CD8-positive, alpha-beta memory T cell (primary cell): ENCODE measurements at regions of chr2 and their contacts with region 1.

Region 1: DNA sequence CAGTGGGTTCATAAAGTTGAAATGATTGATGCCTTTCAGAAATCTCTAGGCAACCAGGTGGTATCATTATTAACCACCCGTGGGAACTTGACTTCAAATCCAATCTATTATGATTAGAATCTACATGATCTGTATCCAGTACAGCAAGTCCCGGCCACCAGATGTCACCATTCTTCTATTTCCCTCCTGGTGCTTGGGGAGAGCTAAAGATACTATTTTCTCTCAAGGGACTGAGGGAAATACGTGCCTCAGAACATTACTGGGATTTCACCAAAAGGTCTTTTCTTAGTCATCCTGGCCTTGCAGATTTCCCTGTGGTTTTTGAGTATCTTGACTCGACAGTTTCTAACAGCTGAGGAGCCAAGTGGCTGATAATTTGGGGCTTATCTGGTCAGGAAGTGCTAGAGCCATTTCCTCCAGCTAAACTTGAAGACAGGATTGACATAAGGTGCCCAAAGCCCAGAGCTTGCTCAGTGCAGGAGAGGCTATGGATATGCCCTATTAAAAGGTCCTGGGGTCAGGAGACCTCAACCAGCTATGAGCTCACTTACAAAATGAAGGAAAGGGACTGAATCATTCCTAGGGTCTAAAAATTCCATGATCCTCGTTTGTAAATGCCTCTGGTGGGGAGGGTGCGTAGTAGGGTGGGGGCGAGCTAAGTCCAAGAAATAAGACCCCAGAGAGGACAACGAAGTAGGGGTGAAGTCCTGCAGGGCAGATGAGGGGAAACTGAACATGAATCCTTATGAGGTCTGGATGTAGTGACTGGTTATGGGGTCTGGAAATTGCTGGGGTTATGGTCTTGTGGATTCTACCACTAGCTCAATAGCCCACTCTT is 135.4 kb upstream of the MGAT5 start:
- DNase-seq: peak; percentile 65 to 88 (median 75)
- H3K4me3 ChIP-seq: no peak overlapping the region
- H3K4me3 Mint-ChIP-seq: peak overlapping the region; percentile 84 to 99 (median 97)
- H3K27ac ChIP-seq: no peak overlapping the region
- H3K27ac Mint-ChIP-seq: peak overlapping the region; percentile 1 to 98 (median 81)
- H3K4me1 ChIP-seq: peaks cover 35% of the 10 kb centered on the region
- H3K4me1 Mint-ChIP-seq: peaks cover 34 to 39% (median 38%) of the 10 kb centered on the region in 3 donors
- H3K27me3 ChIP-seq: no peaks in the 10 kb centered on the region
- H3K27me3 Mint-ChIP-seq: peaks cover 0 to 3% of the 10 kb centered on the region in 2 donors

Region 2: GRCh38 chr2:133958832-133959465 is 159.5 kb before region 1 on chr2:
- CTCF ChIA-PET with region 1: no interaction called
- POLR2A ChIA-PET with region 1: no interaction called
- DNase-seq: no peak
- H3K4me3 ChIP-seq: no peak overlapping the region
- H3K4me3 Mint-ChIP-seq: no peak overlapping the region
- H3K27ac ChIP-seq: no peak overlapping the region
- H3K27ac Mint-ChIP-seq: no peak overlapping the region
- H3K4me1 ChIP-seq: no peaks in the 10 kb centered on the region
- H3K4me1 Mint-ChIP-seq: no peaks in the 10 kb centered on the region
- H3K27me3 ChIP-seq: peaks cover 6% of the 10 kb centered on the region
- H3K27me3 Mint-ChIP-seq: peaks cover 18 to 57% of the 10 kb centered on the region in 2 donors

Region 3: DNA sequence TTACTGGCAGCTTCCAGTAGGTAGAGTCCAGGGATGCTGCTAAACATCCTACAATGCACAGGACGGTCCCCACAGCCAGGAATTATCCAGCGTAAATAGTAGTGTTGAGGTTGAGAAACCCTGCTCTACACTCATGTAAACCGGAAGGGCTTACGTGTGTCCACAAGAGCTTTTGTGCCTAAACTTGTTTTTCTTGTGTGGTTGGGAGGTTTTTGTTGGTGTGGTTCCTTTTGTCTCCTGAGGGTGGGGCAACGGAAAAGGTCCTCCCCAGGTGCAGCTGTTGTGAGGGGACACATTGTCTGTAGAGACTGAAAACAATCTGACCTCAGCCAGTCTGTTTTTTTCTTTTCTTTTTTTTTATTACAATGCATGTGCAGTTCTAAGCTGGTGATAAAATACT is 62.7 kb after region 1 on chr2:
- CTCF ChIA-PET with region 1: interaction called, 17 read pairs
- POLR2A ChIA-PET with region 1: interaction called, 10 read pairs
- DNase-seq: peak; percentile 16 to 81 (median 75)
- H3K4me3 ChIP-seq: no peak overlapping the region
- H3K4me3 Mint-ChIP-seq: peak overlapping the region in 6 of 7 donors; percentile 5 to 72 (median 50)
- H3K27ac ChIP-seq: no peak overlapping the region
- H3K27ac Mint-ChIP-seq: peak overlapping the region; percentile 72 to 96 (median 92)
- H3K4me1 ChIP-seq: peaks cover 60% of the 10 kb centered on the region
- H3K4me1 Mint-ChIP-seq: peaks cover 87 to 98% (median 95%) of the 10 kb centered on the region in 3 donors
- H3K27me3 ChIP-seq: no peaks in the 10 kb centered on the region
- H3K27me3 Mint-ChIP-seq: no peaks in the 10 kb centered on the region

Region 4: DNA sequence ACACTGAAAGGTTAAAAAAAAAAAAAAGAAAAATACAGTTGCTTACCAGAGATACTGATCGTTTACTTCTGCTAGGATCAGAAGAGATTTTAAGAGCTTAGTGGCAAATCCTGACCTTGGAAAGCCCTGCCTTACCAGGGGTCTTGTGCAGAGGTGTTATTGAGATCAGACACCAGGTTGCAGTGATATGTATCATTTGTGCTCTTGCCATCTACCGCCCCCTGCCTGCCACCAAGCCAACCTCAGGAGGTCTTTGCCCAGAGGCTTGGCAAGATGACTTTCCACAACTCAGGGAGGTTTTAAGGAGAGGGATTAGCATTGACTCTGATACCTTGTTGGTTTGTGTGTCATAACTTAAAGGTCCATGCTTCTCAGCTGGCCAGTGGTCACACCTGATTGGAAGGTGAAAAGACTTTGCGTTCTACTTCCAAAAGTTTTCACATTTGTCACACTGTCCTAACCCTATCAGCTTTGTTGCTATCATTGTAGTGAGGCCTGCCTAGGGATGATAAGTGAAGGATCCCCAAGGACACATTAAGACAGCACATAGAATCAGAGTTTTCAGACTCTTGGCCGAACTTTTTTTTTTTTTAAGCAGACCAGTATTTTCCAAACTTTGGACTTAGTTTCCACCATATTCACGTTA is 89.2 kb after region 1 on chr2:
- CTCF ChIA-PET with region 1: interaction called, 78 read pairs
- POLR2A ChIA-PET with region 1: interaction called, 7 read pairs
- DNase-seq: peak; percentile 45 to 73 (median 47)
- H3K4me3 ChIP-seq: no peak overlapping the region
- H3K4me3 Mint-ChIP-seq: peak overlapping the region in 1 of 7 donors; percentile 23
- H3K27ac ChIP-seq: no peak overlapping the region
- H3K27ac Mint-ChIP-seq: peak overlapping the region; percentile 6 to 66 (median 28)
- H3K4me1 ChIP-seq: peaks cover 34% of the 10 kb centered on the region
- H3K4me1 Mint-ChIP-seq: peaks cover 13 to 15% (median 15%) of the 10 kb centered on the region in 3 donors
- H3K27me3 ChIP-seq: no peaks in the 10 kb centered on the region
- H3K27me3 Mint-ChIP-seq: no peaks in the 10 kb centered on the region

Region 5: GRCh38 chr2:134245340-134245984 is 127.0 kb after region 1 on chr2:
- CTCF ChIA-PET with region 1: interaction called, 85 read pairs
- POLR2A ChIA-PET with region 1: interaction called, 4 read pairs
- DNase-seq: peak; percentile 58 to 80 (median 62)
- H3K4me3 ChIP-seq: no peak overlapping the region
- H3K4me3 Mint-ChIP-seq: peak overlapping the region in 5 of 7 donors; percentile 4 to 44 (median 39)
- H3K27ac ChIP-seq: no peak overlapping the region
- H3K27ac Mint-ChIP-seq: peak overlapping the region in 7 of 8 donors; percentile 8 to 83 (median 63)
- H3K4me1 ChIP-seq: peaks cover 78% of the 10 kb centered on the region
- H3K4me1 Mint-ChIP-seq: peaks cover 80 to 97% (median 97%) of the 10 kb centered on the region in 3 donors
- H3K27me3 ChIP-seq: no peaks in the 10 kb centered on the region
- H3K27me3 Mint-ChIP-seq: no peaks in the 10 kb centered on the region

Region 6: GRCh38 chr2:134453973-134454372 is 335.5 kb after region 1 on chr2:
- CTCF ChIA-PET with region 1: interaction called, 38 read pairs
- POLR2A ChIA-PET with region 1: no interaction called
- DNase-seq: no peak
- H3K4me3 ChIP-seq: no peak overlapping the region
- H3K4me3 Mint-ChIP-seq: no peak overlapping the region
- H3K27ac ChIP-seq: no peak overlapping the region
- H3K27ac Mint-ChIP-seq: peak overlapping the region in 1 of 8 donors; percentile 83
- H3K4me1 ChIP-seq: no peaks in the 10 kb centered on the region
- H3K4me1 Mint-ChIP-seq: peaks cover 0 to 4% (median 0%) of the 10 kb centered on the region in 3 donors
- H3K27me3 ChIP-seq: no peaks in the 10 kb centered on the region
- H3K27me3 Mint-ChIP-seq: peaks cover 0 to 2% of the 10 kb centered on the region in 2 donors